ENCODE measurements at regions of chr1 and their contacts with region 1.

Region 1: DNA sequence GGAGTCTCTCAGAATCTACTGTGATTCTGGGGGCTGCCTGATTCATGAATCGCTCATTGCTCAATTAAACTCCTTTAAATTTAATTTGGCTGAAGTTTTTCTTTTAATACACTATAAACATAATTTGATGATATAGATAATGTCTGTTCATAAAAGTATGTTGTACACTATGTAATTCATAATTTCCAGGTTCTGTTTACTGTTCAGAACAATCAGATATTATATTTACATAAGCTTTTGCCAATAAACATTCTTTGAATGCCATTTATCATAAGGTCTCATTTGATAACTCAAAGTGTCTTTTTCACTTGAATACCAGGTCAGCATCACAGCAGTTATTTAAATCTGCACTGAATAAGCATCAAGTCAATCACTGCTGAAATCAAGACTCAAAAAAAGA is 39.6 kb downstream of the PIGK start:
- DNase-seq: no peak
- H3K4me3 ChIP-seq: no peak overlapping the region
- H3K27ac ChIP-seq: no peak overlapping the region
- H3K4me1 ChIP-seq: no peaks in the 10 kb centered on the region
- H3K27me3 ChIP-seq: no peaks in the 10 kb centered on the region
- CTCF ChIP-seq: no peak
- POLR2A ChIP-seq: no peak

Region 2: GRCh38 chr1:76238094-76238628 is 941.5 kb before region 1 on chr1:
- intact Hi-C with region 1: no loop called
- DNase-seq: no peak
- H3K4me3 ChIP-seq: no peak overlapping the region
- H3K27ac ChIP-seq: no peak overlapping the region
- H3K4me1 ChIP-seq: no peaks in the 10 kb centered on the region
- H3K27me3 ChIP-seq: no peaks in the 10 kb centered on the region
- CTCF ChIP-seq: no peak
- POLR2A ChIP-seq: no peak

Region 3: GRCh38 chr1:78385744-78386462 is 1206.3 kb after region 1 on chr1:
- intact Hi-C with region 1: loop called (anchors 5 kb)
- DNase-seq: no peak
- H3K4me3 ChIP-seq: no peak overlapping the region
- H3K27ac ChIP-seq: no peak overlapping the region
- H3K4me1 ChIP-seq: no peaks in the 10 kb centered on the region
- H3K27me3 ChIP-seq: no peaks in the 10 kb centered on the region
- CTCF ChIP-seq: no peak
- POLR2A ChIP-seq: no peak

Region 4: DNA sequence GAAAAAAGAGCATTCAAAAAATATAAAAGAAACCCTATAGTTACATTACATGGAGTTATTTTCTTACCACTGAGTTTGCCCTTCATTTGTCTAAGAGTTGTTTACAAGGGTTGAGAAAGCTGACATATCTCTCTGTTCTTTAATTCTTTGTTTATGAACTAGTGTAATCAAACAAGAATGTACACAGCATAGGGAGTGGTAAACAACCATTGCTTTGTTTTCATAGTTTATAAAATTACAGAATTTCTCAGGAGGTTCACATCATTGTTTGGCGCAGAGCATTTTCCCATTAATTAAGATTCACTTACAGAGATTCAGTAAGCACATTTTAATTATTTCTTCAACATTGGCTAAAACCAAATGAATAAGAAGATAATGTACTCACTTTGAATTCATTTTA is 1557.6 kb after region 1 on chr1:
- intact Hi-C with region 1: no loop called
- DNase-seq: no peak
- H3K4me3 ChIP-seq: no peak overlapping the region
- H3K27ac ChIP-seq: no peak overlapping the region
- H3K4me1 ChIP-seq: no peaks in the 10 kb centered on the region
- H3K27me3 ChIP-seq: no peaks in the 10 kb centered on the region
- CTCF ChIP-seq: no peak
- POLR2A ChIP-seq: no peak